ENCODE measurements at regions of chr1 and their contacts with region 1.

Region 1: GRCh38 chr1:28104866-28105467 is 16.6 kb upstream of the EYA3 start:
- DNase-seq: no peak
- H3K4me3 Mint-ChIP-seq: no peak overlapping the region
- H3K27ac Mint-ChIP-seq: no peak overlapping the region
- H3K4me1 Mint-ChIP-seq: no peaks in the 10 kb centered on the region
- H3K27me3 Mint-ChIP-seq: peaks cover 13% of the 10 kb centered on the region

Region 2: GRCh38 chr1:26582836-26583460 is 1522.0 kb before region 1 on chr1:
- intact Hi-C with region 1: no loop called
- DNase-seq: peak; percentile 37
- H3K4me3 Mint-ChIP-seq: peak overlapping the region; percentile 49
- H3K27ac Mint-ChIP-seq: peak overlapping the region; percentile 93
- H3K4me1 Mint-ChIP-seq: peaks cover 55% of the 10 kb centered on the region
- H3K27me3 Mint-ChIP-seq: no peaks in the 10 kb centered on the region

Region 3: DNA sequence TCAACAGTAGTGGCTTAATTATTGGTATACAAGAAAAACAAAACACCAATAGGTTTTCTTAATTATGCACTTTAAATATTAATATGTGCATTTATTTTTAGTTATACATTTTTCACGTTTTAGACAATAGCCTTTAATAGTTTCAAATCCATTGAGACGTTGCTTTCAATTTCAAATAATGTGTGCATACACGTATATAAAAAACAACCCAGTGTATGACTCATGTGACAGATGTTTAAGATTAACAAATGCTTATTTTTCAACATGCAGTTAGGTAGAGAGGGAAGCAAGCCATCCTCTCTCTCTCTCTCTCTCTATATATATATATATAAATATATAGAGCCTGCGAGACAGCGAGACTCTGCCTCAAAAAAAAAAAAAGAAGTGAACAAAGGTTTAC is 40.9 kb before region 1 on chr1:
- intact Hi-C with region 1: loop called (anchors 1 kb)
- DNase-seq: no peak
- H3K4me3 Mint-ChIP-seq: no peak overlapping the region
- H3K27ac Mint-ChIP-seq: no peak overlapping the region
- H3K4me1 Mint-ChIP-seq: peaks cover 19% of the 10 kb centered on the region
- H3K27me3 Mint-ChIP-seq: no peaks in the 10 kb centered on the region

Measured in activated T-helper 1 cell treated with anti-CD3 and anti-CD28 coated beads, Interleukin-12 subunit alpha, Interleukin-12 subunit beta, Interleukin-2, Interleukin-4 antibody, amounts not matched to agents 30 ng/mL and 10 ng/mL and 1 ng/mL, durations not matched to agents 14 hours and 24 hours and 36 hours (primary cell).